SK-N-SH (cell line): ENCODE measurements at regions of chr17 and their contacts with region 1.

Region 1: GRCh38 chr17:5191541-5192417 is at the start of gene ZNF594:
- DNase-seq: peak; percentile 99
- H3K4me3 ChIP-seq: peak within 1 kb of the TSS; percentile 79 to 94
- H3K27ac ChIP-seq: peak within 1 kb of the TSS; percentile 71 to 80
- H3K4me1 ChIP-seq: peaks cover 0 to 7% of the 10 kb centered on the region in 2 experiments; a peak in 1 of 4 replicates
- H3K27me3 ChIP-seq: no peaks in the 10 kb centered on the region
- CTCF ChIP-seq: peak; percentile 69
- EP300 ChIP-seq: no peak
- RAD21 ChIP-seq: no peak
- polyA plus RNA-seq, gene ZNF594: 2.8 and 4.8 TPM in 2 replicates

Region 2: DNA sequence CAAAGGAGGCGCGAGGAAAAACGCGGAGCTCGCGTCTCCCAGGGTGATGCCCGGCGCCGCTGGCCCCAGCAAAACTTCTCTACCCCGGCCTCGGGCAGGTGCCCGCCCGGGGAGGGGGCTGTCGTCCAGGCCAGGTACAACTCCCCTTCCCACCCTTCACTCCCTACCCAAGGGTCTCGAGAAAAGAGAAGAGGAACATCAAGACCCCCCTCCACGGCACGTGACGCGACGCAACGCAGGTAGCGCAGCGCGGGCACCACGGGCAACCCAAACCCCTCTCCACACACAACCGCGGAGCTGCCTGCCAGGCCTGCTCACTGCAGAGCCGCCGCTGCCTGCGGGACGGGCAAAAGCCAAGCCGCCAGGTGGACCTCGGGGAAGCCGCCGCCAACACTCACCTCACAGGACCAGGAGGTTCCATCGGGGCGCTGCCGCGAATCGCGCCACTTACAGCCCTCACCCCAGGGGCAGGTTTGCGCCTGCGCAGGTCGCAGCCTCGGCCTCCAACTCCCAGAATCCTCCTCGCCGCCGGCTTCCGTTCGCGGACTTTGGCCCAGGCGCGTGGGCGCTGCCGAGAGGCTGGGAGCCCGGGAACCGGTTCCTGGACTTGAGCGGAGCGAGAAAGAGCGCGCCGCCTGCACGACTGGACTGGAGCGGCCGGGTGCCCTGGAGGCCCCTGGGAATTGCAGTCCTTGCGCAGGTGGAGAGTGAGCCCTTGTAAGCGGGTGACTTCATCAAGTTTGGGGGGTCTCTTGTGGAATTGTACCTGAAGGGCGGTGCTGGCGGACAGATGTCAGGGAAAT is 80.2 kb before region 1 on chr17 and contains the start of gene ZNF232:
- CTCF ChIA-PET with region 1: interaction called, 10 read pairs
- POLR2A ChIA-PET with region 1: interaction called, 3 read pairs
- DNase-seq: peak; percentile 98
- H3K4me3 ChIP-seq: peak within 1 kb of the TSS; percentile 81 to 84
- H3K27ac ChIP-seq: peak within 1 kb of the TSS; percentile 40 to 81; a peak in 3 of 4 replicates
- H3K4me1 ChIP-seq: peaks cover 0 to 7% of the 10 kb centered on the region in 2 experiments; a peak in 2 of 4 replicates
- H3K27me3 ChIP-seq: peaks cover 4% of the 10 kb centered on the region; the same call in 1 of the 2 replicates
- CTCF ChIP-seq: no peak
- EP300 ChIP-seq: no peak
- RAD21 ChIP-seq: no peak
- polyA plus RNA-seq, gene ZNF232: 3.4 and 3.6 TPM in 2 replicates

Region 3: DNA sequence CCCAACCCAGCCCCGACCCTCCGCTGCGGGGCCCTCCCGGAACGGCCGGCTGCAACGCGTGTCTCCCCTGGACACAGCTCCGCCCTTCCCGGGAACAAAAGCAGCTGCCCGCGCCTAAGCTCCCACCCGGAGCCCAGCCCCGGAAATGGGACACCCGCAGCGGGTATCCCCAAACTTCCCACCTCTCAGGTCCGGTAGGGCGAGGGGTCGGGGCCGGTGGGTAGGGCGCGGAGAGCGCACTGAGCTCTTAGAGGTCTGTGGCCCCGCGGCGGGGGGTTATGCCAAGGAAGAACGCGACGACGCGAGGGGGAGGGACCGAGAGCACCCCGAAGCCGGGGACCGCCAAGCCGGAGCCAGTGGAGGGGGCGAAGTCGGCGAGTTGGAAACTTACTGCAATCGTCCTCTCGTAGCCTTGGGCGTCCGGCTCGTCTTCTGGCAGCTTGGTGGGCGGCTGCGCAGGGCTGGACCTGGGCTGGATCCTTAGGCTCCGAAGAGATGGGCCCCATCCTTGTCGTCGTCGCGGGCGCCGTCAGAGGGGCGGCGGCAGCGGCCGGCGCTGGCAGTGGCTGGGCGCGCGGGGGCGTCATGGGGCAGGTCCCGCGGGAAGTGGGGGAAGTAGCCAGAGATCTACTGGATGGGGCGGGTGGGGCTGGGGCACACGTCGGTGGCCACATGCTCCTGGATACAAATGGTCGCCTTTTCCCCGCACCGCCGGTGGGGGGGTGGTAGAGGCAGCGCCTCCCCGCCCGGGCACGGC is 69.0 kb before region 1 on chr17:
- CTCF ChIA-PET with region 1: no interaction called
- POLR2A ChIA-PET with region 1: no interaction called
- DNase-seq: peak; percentile 67
- H3K4me3 ChIP-seq: peak overlapping the region in 1 of 2 experiments; percentile 31; a peak in 1 of 4 replicates
- H3K27ac ChIP-seq: no peak overlapping the region
- H3K4me1 ChIP-seq: no peaks in the 10 kb centered on the region; a peak in 1 of 4 replicates
- H3K27me3 ChIP-seq: peaks cover 9% of the 10 kb centered on the region; the same call in 1 of the 2 replicates
- CTCF ChIP-seq: no peak
- EP300 ChIP-seq: no peak
- RAD21 ChIP-seq: no peak

Region 4: GRCh38 chr17:5181509-5182305 is 10.1 kb before region 1 on chr17:
- CTCF ChIA-PET with region 1: interaction called, 15 read pairs
- POLR2A ChIA-PET with region 1: no interaction called
- DNase-seq: no peak
- H3K4me3 ChIP-seq: peak overlapping the region in 1 of 2 experiments; percentile 10; a peak in 1 of 4 replicates
- H3K27ac ChIP-seq: no peak overlapping the region
- H3K4me1 ChIP-seq: no peaks in the 10 kb centered on the region
- H3K27me3 ChIP-seq: no peaks in the 10 kb centered on the region
- CTCF ChIP-seq: no peak
- EP300 ChIP-seq: no peak
- RAD21 ChIP-seq: no peak